CD8-positive, alpha-beta T cell (primary cell): ENCODE measurements at regions of chr17 and their contacts with region 1.

Region 1: DNA sequence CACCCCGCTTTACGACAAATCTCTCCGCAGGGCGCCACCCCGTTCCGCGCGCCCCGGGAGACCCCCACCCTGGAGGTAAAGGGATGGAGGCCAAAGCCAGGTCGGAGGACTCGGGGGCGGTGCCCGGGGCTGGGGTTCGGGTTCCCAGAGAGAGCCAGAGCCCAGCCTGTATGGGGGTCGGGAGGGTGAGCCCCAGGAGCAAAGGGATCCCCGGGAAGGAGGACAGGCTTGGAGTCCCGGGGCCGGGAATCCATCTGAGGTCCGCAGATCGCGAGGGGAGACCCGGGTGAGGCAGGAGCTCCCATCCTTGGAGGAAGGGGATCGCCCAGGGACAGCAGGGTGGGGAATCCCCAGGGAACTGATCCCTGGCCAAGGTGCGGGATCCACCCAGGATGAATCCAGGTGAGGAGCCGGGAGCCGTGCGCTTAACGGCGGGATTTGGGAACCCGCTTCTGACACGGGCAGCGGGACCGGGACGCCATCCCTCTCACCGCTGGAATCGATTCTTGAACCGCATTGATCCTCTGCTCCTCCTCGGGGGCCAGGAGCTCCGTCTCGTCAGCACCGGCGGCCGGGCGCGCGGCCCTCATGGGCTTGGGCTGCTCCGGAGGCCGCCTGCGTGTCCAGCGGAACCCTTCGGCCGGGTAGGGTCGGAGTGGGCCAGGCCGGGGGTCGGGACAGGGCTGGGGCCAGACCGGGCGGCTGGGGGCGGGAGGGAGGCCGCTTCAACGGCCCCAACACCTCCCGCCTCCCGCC is at the start of gene MMD:
- DNase-seq: peak in 3 of 9 experiments; percentile 2 to 67 (median 8)
- ATAC-seq: no peak
- H3K4me3 ChIP-seq: peak within 1 kb of the TSS; percentile 89 to 96
- H3K4me3 Mint-ChIP-seq: peak within 1 kb of the TSS; percentile 89
- H3K27ac ChIP-seq: peak within 1 kb of the TSS; percentile 69 to 70
- H3K27ac Mint-ChIP-seq: peak within 1 kb of the TSS; percentile 96
- H3K4me1 ChIP-seq: peaks cover 25% of the 10 kb centered on the region
- H3K4me1 Mint-ChIP-seq: peaks cover 45% of the 10 kb centered on the region
- H3K27me3 ChIP-seq: peaks cover 0 to 4% of the 10 kb centered on the region in 2 experiments
- H3K27me3 Mint-ChIP-seq: peaks cover 20% of the 10 kb centered on the region
- CTCF ChIP-seq: no peak
- total RNA-seq, gene MMD: 28.2 to 32.8 TPM

Region 2: GRCh38 chr17:54968262-54968987 is 452.9 kb before region 1 on chr17 and contains the starts of genes COX11 and STXBP4:
- CTCF ChIA-PET with region 1: no interaction called
- POLR2A ChIA-PET with region 1: no interaction called
- intact Hi-C with region 1: loop called (anchors 1 kb)
- DNase-seq: peak; percentile 85 to 98 (median 93)
- ATAC-seq: peak; percentile 96
- H3K4me3 ChIP-seq: peak within 1 kb of the TSS; percentile 65 to 88
- H3K4me3 Mint-ChIP-seq: no peak within 1 kb of the TSS
- H3K27ac ChIP-seq: peak within 1 kb of the TSS; percentile 70 to 78
- H3K27ac Mint-ChIP-seq: no peak within 1 kb of the TSS
- H3K4me1 ChIP-seq: peaks cover 21% of the 10 kb centered on the region
- H3K4me1 Mint-ChIP-seq: peaks cover 33% of the 10 kb centered on the region
- H3K27me3 ChIP-seq: no peaks in the 10 kb centered on the region
- H3K27me3 Mint-ChIP-seq: no peaks in the 10 kb centered on the region
- CTCF ChIP-seq: no peak
- total RNA-seq, gene COX11: 26.2 to 27.4 TPM
- total RNA-seq, gene STXBP4: 3.0 to 4.0 TPM

Region 3: GRCh38 chr17:55238179-55238930 is 183.0 kb before region 1 on chr17:
- CTCF ChIA-PET with region 1: no interaction called
- POLR2A ChIA-PET with region 1: no interaction called
- intact Hi-C with region 1: loop called in 1 of 2 experiments (anchors 5 kb)
- DNase-seq: peak; percentile 58 to 93 (median 82)
- ATAC-seq: peak; percentile 86
- H3K4me3 ChIP-seq: peak overlapping the region; percentile 57 to 71
- H3K4me3 Mint-ChIP-seq: peak overlapping the region; percentile 84
- H3K27ac ChIP-seq: peak overlapping the region; percentile 55 to 60
- H3K27ac Mint-ChIP-seq: peak overlapping the region; percentile 60
- H3K4me1 ChIP-seq: peaks cover 20% of the 10 kb centered on the region
- H3K4me1 Mint-ChIP-seq: peaks cover 18% of the 10 kb centered on the region
- H3K27me3 ChIP-seq: peaks cover 0 to 4% of the 10 kb centered on the region in 2 experiments
- H3K27me3 Mint-ChIP-seq: peaks cover 23% of the 10 kb centered on the region
- CTCF ChIP-seq: no peak

Region 4: GRCh38 chr17:55264645-55265298 is 156.6 kb before region 1 on chr17 and contains the start of gene HLF:
- CTCF ChIA-PET with region 1: no interaction called
- POLR2A ChIA-PET with region 1: no interaction called
- intact Hi-C with region 1: loop called (anchors 2 to 5 kb)
- DNase-seq: peak; percentile 44 to 89 (median 68)
- ATAC-seq: peak; percentile 93
- H3K4me3 ChIP-seq: peak within 1 kb of the TSS; percentile 26 to 35
- H3K4me3 Mint-ChIP-seq: peak within 1 kb of the TSS; percentile 78
- H3K27ac ChIP-seq: no peak within 1 kb of the TSS
- H3K27ac Mint-ChIP-seq: no peak within 1 kb of the TSS
- H3K4me1 ChIP-seq: peaks cover 21% of the 10 kb centered on the region
- H3K4me1 Mint-ChIP-seq: peaks cover 24% of the 10 kb centered on the region
- H3K27me3 ChIP-seq: peaks cover 12 to 16% of the 10 kb centered on the region in 2 experiments
- H3K27me3 Mint-ChIP-seq: peaks cover 57% of the 10 kb centered on the region
- CTCF ChIP-seq: no peak
- total RNA-seq, gene HLF: 0.42 to 0.62 TPM

Region 5: DNA sequence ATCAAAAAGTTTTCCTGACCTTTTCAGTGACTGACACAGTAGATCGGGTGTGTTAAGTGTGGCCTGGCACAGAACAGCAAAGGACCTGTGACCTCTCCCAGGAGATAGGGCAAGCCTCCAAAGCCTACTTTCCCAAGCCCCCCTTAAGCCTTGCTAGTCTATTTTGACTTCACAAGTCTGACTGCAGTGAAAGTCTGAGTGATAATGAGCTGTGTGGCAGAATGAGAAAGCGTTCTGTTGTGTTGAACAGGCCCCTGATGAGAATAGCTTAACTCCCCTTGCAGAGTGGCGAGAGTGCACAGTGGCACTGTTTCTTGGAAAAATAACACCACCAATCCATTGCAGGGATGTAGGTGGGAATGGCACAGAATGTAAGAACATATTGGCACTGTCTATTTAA is 32.5 kb before region 1 on chr17:
- CTCF ChIA-PET with region 1: no interaction called
- POLR2A ChIA-PET with region 1: no interaction called
- intact Hi-C with region 1: no loop called
- DNase-seq: no peak
- ATAC-seq: no peak
- H3K4me3 ChIP-seq: no peak overlapping the region
- H3K4me3 Mint-ChIP-seq: no peak overlapping the region
- H3K27ac ChIP-seq: no peak overlapping the region
- H3K27ac Mint-ChIP-seq: no peak overlapping the region
- H3K4me1 ChIP-seq: no peaks in the 10 kb centered on the region
- H3K4me1 Mint-ChIP-seq: no peaks in the 10 kb centered on the region
- H3K27me3 ChIP-seq: no peaks in the 10 kb centered on the region
- H3K27me3 Mint-ChIP-seq: no peaks in the 10 kb centered on the region
- CTCF ChIP-seq: no peak

Region 6: GRCh38 chr17:55664287-55664686 is 242.9 kb after region 1 on chr17:
- CTCF ChIA-PET with region 1: no interaction called
- POLR2A ChIA-PET with region 1: no interaction called
- intact Hi-C with region 1: no loop called
- DNase-seq: peak in 1 of 9 experiments; percentile 6
- ATAC-seq: no peak
- H3K4me3 ChIP-seq: no peak overlapping the region
- H3K4me3 Mint-ChIP-seq: no peak overlapping the region
- H3K27ac ChIP-seq: no peak overlapping the region
- H3K27ac Mint-ChIP-seq: no peak overlapping the region
- H3K4me1 ChIP-seq: no peaks in the 10 kb centered on the region
- H3K4me1 Mint-ChIP-seq: no peaks in the 10 kb centered on the region
- H3K27me3 ChIP-seq: no peaks in the 10 kb centered on the region
- H3K27me3 Mint-ChIP-seq: peaks cover 4% of the 10 kb centered on the region
- CTCF ChIP-seq: no peak

Region 7: DNA sequence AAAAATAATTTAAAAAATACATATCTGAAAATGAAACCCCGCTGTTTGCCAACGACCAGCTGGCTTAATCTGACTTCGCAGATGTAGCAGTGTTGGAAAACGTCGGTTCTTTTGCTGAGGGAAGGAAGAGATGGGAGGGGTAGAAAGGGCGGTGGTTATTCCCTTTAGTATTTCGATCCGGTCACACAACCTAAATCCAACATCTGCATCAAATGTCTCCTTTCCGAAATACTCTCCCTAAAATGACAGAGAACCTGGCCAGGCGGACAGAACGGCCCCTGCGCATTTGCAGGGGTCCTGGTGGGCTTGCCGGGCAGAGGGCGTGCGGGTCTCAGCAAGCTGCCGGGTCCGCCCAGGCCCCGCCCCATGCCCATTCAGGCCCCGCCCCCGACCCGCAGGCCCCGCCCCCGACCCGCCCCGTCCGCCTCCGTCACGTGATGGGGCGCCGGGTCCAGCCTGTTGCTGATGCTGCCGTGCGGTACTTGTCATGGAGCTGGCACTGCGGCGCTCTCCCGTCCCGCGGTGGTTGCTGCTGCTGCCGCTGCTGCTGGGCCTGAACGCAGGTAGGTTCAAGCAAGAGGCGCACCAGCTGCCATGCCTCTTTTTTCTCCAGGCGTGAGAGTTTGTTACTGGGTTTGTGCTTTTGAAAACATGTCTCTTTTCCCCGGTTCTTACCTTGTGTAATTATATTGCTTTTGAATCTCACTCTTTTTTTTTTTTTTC is 1556.5 kb after region 1 on chr17 and contains the start of gene SCPEP1:
- CTCF ChIA-PET with region 1: no interaction called
- POLR2A ChIA-PET with region 1: no interaction called
- intact Hi-C with region 1: loop called in 1 of 2 experiments (anchors 5 kb)
- DNase-seq: peak; percentile 67 to 89 (median 80)
- ATAC-seq: peak; percentile 98
- H3K4me3 ChIP-seq: peak within 1 kb of the TSS; percentile 73 to 79
- H3K4me3 Mint-ChIP-seq: peak within 1 kb of the TSS; percentile 93
- H3K27ac ChIP-seq: peak within 1 kb of the TSS; percentile 33 to 56
- H3K27ac Mint-ChIP-seq: peak within 1 kb of the TSS; percentile 90
- H3K4me1 ChIP-seq: peaks cover 12% of the 10 kb centered on the region
- H3K4me1 Mint-ChIP-seq: peaks cover 19% of the 10 kb centered on the region
- H3K27me3 ChIP-seq: no peaks in the 10 kb centered on the region
- H3K27me3 Mint-ChIP-seq: peaks cover 2% of the 10 kb centered on the region
- CTCF ChIP-seq: no peak
- total RNA-seq, gene SCPEP1: 22.9 to 28.4 TPM